ENCODE measurements at regions of chr12 and their contacts with region 1.

Region 1: DNA sequence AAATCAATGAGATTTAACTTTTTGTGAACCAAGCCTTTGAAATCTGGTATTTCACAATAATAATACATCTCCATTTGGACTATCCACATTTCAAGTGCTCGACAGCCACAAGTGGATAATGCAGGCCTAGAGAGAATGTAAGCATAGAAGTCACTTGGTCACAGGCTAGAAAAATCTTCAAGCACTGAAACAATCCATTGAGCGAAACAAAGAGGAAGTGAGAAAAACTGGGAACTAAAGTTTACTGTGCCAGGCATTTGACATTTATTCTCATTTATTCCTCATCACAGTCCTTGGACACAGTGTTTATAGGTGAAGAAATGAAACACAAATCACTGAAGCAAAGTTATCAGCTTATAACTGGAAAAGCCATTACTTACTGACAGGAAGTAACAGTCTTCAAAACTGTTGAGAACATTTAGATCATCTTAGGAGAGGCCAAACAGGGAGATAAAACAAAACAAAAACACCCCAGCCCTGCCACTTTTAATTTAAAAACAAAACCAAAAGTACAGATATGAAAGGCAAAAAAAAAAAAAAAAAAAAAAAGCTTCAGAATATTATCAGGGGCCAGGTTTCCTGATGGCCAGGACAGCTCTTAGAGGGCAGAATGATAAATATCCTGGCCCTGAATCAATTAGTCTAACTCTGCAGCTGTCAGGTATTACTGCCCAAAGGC is 29.2 kb downstream of the GNS start:
- DNase-seq: peak in 1 of 35 experiments; percentile 31
- ATAC-seq: peak in 2 of 4 experiments; percentile 19 to 45
- H3K4me3 ChIP-seq: no peak overlapping the region
- H3K4me3 Mint-ChIP-seq: peak overlapping the region in 1 of 3 donors; percentile 51
- H3K27ac ChIP-seq: peak overlapping the region; percentile 91
- H3K27ac Mint-ChIP-seq: peak overlapping the region; percentile 86 to 92
- H3K4me1 ChIP-seq: peaks cover 0 to 12% of the 10 kb centered on the region in 2 experiments
- H3K4me1 Mint-ChIP-seq: peaks cover 15 to 18% (median 18%) of the 10 kb centered on the region in 3 donors
- H3K27me3 ChIP-seq: no peaks in the 10 kb centered on the region
- H3K27me3 Mint-ChIP-seq: no peaks in the 10 kb centered on the region

Region 2: DNA sequence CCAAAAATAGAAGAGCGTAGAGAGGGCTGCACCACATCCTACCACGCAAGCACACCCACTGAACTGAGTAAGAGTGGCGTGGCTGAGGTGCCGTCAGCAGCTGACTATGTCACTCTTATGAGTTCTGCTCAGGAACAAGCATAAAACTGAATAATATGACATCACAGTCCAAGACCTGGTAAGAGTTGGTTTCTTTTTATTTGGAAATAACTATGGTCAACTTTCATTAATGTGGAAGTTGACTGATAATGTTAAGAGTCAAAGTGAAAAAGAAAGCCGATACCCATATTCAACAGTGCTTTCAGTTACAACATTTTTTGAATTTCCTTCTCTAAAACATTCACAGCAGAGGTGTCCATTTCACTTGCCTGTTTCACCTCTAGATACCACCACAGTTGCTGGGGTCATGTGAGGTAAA is 15.5 kb before region 1 on chr12:
- CTCF ChIA-PET with region 1: interaction called in 1 of 2 experiments, 10 read pairs
- POLR2A ChIA-PET with region 1: no interaction called
- DNase-seq: peak in 25 of 35 experiments; percentile 5 to 55 (median 27)
- ATAC-seq: peak in 3 of 4 experiments; percentile 61 to 78 (median 63)
- H3K4me3 ChIP-seq: no peak overlapping the region
- H3K4me3 Mint-ChIP-seq: no peak overlapping the region
- H3K27ac ChIP-seq: peak overlapping the region; percentile 57
- H3K27ac Mint-ChIP-seq: no peak overlapping the region
- H3K4me1 ChIP-seq: peaks cover 4 to 13% of the 10 kb centered on the region in 2 experiments
- H3K4me1 Mint-ChIP-seq: peaks cover 25 to 37% (median 36%) of the 10 kb centered on the region in 3 donors
- H3K27me3 ChIP-seq: no peaks in the 10 kb centered on the region
- H3K27me3 Mint-ChIP-seq: no peaks in the 10 kb centered on the region

Measured in T-cell (primary cell).